ENCODE measurements at regions of chr6 and their contacts with region 1.

Region 1: DNA sequence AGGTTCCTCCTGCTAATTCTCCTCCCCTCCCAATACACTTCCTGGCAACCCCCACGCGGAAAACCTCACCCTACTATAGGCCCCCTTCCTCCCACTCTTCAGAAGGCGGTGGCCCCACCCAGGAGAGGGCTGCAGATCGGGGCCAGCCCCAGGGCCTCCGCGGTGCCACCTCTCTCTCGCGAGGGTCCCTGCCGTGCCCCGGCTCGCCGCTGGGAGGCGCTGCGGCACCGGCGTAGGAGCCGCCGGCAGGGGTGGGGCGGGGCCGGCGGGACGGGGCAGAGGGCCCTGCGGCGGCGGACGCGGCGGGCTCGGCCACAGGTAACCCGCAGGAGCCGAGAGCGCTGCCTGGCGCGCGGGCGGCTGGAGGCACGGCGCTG is at the start of gene ANKRD6:
- DNase-seq: peak; percentile 59 to 98 (median 88)
- ATAC-seq: peak; percentile 94 to 98 (median 97)
- H3K4me3 ChIP-seq: peak within 1 kb of the TSS; percentile 92 to 96 (median 94)
- H3K27ac ChIP-seq: peak within 1 kb of the TSS in 3 of 4 donors; percentile 22 to 33 (median 33)
- H3K4me1 ChIP-seq: no peaks in the 10 kb centered on the region
- H3K27me3 ChIP-seq: no peaks in the 10 kb centered on the region
- CTCF ChIP-seq: peak; percentile 75 to 90 (median 86)
- total RNA-seq, gene ANKRD6: 6.3 to 14.0 (median 9.6) TPM

Region 2: DNA sequence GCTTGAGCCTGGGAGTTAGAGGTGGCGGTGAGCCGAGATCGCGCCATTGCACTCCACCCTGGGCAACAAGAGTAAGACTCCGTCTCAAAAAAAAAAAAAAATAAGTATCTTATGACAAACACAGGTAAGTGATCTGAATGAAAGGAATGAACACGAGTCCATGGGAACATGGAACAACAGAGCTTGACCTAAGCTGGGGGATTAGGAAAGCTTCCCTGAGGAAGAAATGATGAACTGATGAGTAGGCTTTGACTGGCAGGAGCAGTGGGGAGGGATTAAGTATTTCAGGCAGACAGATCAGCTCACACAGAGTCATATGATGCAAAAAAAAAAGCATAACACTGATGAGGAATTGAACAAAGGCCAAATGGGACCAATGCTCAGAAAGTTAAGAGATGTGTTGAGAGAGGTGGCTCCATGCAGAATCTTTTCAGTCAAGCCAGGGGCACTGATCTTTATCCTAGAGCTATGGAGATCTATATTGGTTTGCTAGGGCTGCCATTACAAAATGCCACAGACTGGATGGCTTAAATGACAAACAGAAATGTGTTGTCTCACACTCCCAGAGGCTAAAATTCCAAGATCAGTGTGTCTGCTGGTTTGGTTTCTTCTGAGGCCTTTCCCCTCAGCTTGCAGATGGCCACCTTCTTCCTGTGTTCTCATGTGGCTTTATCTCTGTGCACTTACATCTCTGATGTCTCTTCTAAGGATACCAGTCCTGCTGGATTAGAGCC is 85.6 kb after region 1 on chr6:
- intact Hi-C with region 1: no loop called
- DNase-seq: no peak
- ATAC-seq: no peak
- H3K4me3 ChIP-seq: no peak overlapping the region
- H3K27ac ChIP-seq: no peak overlapping the region
- H3K4me1 ChIP-seq: no peaks in the 10 kb centered on the region
- H3K27me3 ChIP-seq: no peaks in the 10 kb centered on the region
- CTCF ChIP-seq: no peak

Region 3: GRCh38 chr6:89599727-89600126 is 166.9 kb after region 1 on chr6:
- intact Hi-C with region 1: loop called in 1 of 3 experiments (anchors 5 kb)
- DNase-seq: no peak
- ATAC-seq: no peak
- H3K4me3 ChIP-seq: no peak overlapping the region
- H3K27ac ChIP-seq: no peak overlapping the region
- H3K4me1 ChIP-seq: no peaks in the 10 kb centered on the region
- H3K27me3 ChIP-seq: no peaks in the 10 kb centered on the region
- CTCF ChIP-seq: no peak

Region 4: DNA sequence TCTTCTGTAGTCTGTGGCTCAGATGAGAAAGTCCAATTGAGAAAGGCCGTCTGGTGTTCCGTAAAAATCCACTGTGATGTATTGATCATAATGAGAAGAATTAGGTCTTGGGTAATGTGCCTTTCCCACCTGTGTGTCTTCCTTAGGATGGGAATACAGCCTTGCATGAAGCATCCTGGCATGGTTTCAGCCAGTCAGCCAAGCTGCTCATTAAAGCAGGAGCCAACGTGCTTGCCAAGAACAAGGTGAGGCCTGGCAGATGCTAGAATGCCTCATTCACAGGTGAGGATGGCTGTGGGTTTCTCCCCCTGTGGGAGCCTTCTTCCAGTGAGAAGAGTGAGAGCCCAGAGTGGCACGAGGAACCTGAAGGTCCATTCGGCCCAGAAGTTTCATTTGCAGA is 173.0 kb after region 1 on chr6:
- intact Hi-C with region 1: loop called in 2 of 3 experiments (anchors 5 kb)
- DNase-seq: no peak
- ATAC-seq: no peak
- H3K4me3 ChIP-seq: no peak overlapping the region
- H3K27ac ChIP-seq: no peak overlapping the region
- H3K4me1 ChIP-seq: no peaks in the 10 kb centered on the region
- H3K27me3 ChIP-seq: no peaks in the 10 kb centered on the region
- CTCF ChIP-seq: no peak

Region 5: GRCh38 chr6:89921691-89922090 is 488.8 kb after region 1 on chr6:
- intact Hi-C with region 1: no loop called
- DNase-seq: no peak
- ATAC-seq: no peak
- H3K4me3 ChIP-seq: no peak overlapping the region
- H3K27ac ChIP-seq: no peak overlapping the region
- H3K4me1 ChIP-seq: no peaks in the 10 kb centered on the region
- H3K27me3 ChIP-seq: no peaks in the 10 kb centered on the region
- CTCF ChIP-seq: no peak